ENCODE measurements at regions of chr2 and their contacts with region 1.

Region 1: DNA sequence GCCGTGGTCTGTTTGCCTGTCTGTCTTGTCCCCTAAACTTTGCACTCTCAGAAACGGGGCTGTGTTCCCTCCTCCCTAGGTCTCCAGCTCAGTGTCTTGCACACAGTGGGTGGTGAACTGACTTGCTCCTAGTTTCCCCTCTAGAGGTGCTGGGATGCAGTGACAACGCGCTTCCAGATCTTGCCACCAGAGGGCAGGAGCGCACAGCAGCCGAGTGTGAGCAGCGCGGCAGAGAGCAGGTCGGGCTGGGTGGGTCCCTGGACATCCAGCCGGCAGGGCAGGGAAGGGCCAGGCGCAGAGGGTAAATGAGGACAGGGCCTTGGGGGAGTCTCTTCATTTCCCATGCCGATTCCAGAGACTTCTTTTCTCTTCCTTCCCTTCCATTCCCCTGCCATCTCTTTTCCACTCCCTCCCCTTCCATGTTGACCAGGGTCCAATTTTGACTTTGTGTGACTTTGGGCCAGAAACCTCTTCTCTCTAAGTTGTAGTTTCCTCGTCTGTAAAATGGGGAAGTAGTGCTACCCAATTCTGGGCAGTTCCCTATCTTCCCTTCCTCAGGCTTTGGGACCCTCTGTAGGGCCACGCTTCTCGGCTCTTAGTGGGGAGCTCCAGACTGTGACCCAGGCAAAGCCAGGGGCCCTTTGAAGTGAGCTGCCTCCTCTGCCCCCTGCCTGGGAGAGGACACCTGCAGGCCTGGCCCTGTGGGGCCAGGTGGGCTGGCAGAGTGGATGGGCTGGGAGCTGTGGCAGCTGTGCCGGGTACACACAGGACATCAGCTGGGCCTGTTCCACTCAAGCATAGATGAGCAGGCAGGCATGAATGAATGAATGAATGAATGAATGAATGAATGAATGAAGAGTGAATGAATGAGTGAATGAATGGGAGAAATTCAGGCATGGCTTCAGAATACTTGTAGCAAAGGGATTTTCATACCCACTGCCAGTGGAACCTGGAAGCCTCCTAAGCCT is 43.3 kb upstream of the TAF1B start:
- DNase-seq: peak; percentile 93
- ATAC-seq: peak; percentile 92
- H3K4me3 Mint-ChIP-seq: peak overlapping the region; percentile 57
- H3K27ac Mint-ChIP-seq: peak overlapping the region; percentile 91
- H3K4me1 Mint-ChIP-seq: peaks cover 44% of the 10 kb centered on the region
- H3K27me3 Mint-ChIP-seq: peaks cover 8% of the 10 kb centered on the region

Region 2: DNA sequence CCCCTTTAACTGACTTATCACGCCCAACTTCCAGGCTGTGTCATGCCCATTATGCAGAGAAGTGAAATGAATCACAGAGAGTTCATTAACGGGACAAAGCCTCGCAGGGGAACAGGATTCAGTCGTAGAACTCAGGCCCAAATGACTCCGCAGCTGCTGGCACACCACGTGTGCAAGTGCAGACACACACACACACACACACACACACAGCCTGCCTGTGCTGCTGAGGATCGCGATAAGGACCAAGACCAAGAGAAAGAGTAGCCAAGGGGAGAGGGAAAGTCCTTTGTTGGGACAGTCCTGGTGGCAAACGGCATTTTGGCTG is 46.7 kb before region 1 on chr2:
- CTCF ChIA-PET with region 1: interaction called, 26 read pairs
- DNase-seq: peak; percentile 87
- ATAC-seq: peak; percentile 84
- H3K4me3 Mint-ChIP-seq: peak overlapping the region; percentile 66
- H3K27ac Mint-ChIP-seq: peak overlapping the region; percentile 91
- H3K4me1 Mint-ChIP-seq: peaks cover 69% of the 10 kb centered on the region
- H3K27me3 Mint-ChIP-seq: peaks cover 33% of the 10 kb centered on the region

Region 3: GRCh38 chr2:9778012-9778411 is 21.9 kb before region 1 on chr2:
- CTCF ChIA-PET with region 1: interaction called, 70 read pairs
- DNase-seq: no peak
- ATAC-seq: no peak
- H3K4me3 Mint-ChIP-seq: no peak overlapping the region
- H3K27ac Mint-ChIP-seq: no peak overlapping the region
- H3K4me1 Mint-ChIP-seq: peaks cover 52% of the 10 kb centered on the region
- H3K27me3 Mint-ChIP-seq: no peaks in the 10 kb centered on the region

Region 4: DNA sequence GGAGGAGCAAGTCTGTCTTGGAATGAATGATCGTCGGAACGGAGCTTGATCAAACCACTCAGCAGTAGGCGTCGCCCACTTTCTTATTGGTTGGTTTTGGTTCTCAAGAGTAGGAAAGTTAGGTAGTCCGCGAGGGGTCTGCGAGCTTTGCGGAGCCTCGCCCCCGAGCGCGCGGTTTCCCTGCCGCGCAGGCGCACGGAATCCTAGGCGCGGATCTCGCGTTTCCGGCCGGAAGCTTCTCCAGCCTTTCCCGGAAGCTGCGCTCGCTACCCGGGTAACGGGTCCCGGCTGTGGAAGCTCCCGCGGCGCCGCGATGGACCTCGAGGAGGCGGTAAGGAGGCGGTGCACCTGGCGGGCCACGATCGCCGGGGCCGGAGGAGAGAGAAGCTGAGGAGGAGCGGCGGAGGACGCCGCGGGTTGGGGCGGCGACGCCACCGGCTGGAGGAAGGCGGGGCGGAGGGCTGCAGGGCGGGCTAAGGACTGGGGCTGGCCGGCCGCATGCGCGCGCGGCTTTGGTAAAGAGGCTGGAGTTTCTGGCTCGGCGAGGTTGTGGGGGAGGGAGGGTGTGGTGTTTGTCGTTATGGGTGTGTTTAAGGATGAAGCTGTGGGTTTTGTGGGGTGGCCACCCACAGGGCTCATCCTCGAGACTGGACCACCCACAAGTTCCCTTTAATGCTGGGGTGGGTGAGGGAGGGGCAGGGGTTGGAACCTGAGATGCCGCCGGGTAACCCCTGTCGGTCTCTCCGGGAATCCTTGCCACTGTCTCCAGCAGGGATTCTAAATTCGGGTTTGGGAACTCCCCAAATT is 43.5 kb after region 1 on chr2 and contains the start of gene TAF1B:
- CTCF ChIA-PET with region 1: interaction called, 11 read pairs
- DNase-seq: peak; percentile 94
- ATAC-seq: peak; percentile 89
- H3K4me3 Mint-ChIP-seq: peak within 1 kb of the TSS; percentile 91
- H3K27ac Mint-ChIP-seq: peak within 1 kb of the TSS; percentile 86
- H3K4me1 Mint-ChIP-seq: peaks cover 43% of the 10 kb centered on the region
- H3K27me3 Mint-ChIP-seq: peaks cover 2% of the 10 kb centered on the region
- total RNA-seq, gene TAF1B: 29.5 to 31.2 TPM